ENCODE measurements at regions of chr7 and their contacts with region 1.

Region 1: GRCh38 chr7:137626469-137627067 is 220.2 kb downstream of the DGKI start:
- DNase-seq: peak; percentile 31
- ATAC-seq: peak; percentile 86
- H3K4me3 ChIP-seq: no peak overlapping the region
- H3K27ac ChIP-seq: no peak overlapping the region
- H3K4me1 ChIP-seq: no peaks in the 10 kb centered on the region
- H3K27me3 ChIP-seq: peaks cover 11% of the 10 kb centered on the region
- CTCF ChIP-seq: peak; percentile 50 to 83 (median 76); a peak in 5 of 6 replicates
- POLR2A ChIP-seq: no peak
- RAD21 ChIP-seq: peak; percentile 65

Region 2: GRCh38 chr7:137606061-137606674 is 20.4 kb before region 1 on chr7:
- CTCF ChIA-PET with region 1: interaction called, 9 read pairs
- POLR2A ChIA-PET with region 1: no interaction called
- RAD21 ChIA-PET with region 1: interaction called in 1 of 2 experiments, 3 read pairs
- intact Hi-C with region 1: loop called (anchors 1 kb)
- DNase-seq: peak; percentile 35
- ATAC-seq: peak; percentile 47; the same call in 1 of the 2 replicates
- H3K4me3 ChIP-seq: no peak overlapping the region
- H3K27ac ChIP-seq: no peak overlapping the region
- H3K4me1 ChIP-seq: no peaks in the 10 kb centered on the region
- H3K27me3 ChIP-seq: peaks cover 32% of the 10 kb centered on the region
- CTCF ChIP-seq: peak; percentile 21 to 45 (median 38); a peak in 3 of 6 replicates
- POLR2A ChIP-seq: no peak
- RAD21 ChIP-seq: peak; percentile 52

Region 3: GRCh38 chr7:137717811-137718271 is 91.3 kb after region 1 on chr7:
- CTCF ChIA-PET with region 1: no interaction called
- POLR2A ChIA-PET with region 1: no interaction called
- RAD21 ChIA-PET with region 1: no interaction called
- intact Hi-C with region 1: no loop called
- DNase-seq: no peak
- ATAC-seq: no peak
- H3K4me3 ChIP-seq: no peak overlapping the region
- H3K27ac ChIP-seq: no peak overlapping the region
- H3K4me1 ChIP-seq: no peaks in the 10 kb centered on the region
- H3K27me3 ChIP-seq: peaks cover 20% of the 10 kb centered on the region; the same call in 1 of the 2 replicates
- CTCF ChIP-seq: no peak
- POLR2A ChIP-seq: no peak
- RAD21 ChIP-seq: no peak

Region 4: DNA sequence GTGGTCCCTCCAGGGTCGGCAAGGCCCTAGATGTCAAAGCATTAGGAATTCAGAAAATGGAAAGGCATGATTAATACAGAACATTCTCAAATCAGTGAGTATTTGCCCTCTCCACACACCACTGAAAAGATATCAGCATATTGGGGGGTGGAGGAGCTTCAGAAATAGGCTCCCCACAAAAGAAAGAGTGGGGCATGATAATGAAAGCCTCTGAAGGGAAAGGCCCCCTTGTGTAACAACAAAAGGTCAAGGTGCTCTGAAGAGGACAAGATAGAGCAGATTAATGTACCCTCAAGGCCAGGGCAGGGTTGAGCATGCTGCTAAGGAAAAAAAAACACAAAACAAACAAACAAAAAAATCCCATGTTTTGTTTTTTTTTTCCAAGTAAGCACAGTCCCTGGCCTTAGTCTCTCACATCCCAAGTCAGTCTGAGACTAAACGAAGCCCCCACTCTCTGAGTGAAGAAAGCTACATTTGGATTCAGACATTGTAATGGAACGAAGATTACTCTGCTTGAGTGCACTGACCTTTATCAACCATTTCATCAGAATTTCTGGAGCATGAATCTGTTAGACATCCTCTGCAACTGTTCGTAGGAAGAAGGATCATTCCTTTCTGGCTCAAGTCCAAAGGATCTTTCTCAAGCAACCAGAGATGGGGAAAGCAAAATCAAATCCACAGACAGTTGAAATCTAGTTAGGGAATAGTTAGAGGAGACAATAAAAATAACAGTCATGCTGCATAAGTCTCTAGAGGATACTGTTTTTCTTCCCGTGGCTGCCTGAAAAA is 247.6 kb after region 1 on chr7:
- CTCF ChIA-PET with region 1: no interaction called
- POLR2A ChIA-PET with region 1: no interaction called
- RAD21 ChIA-PET with region 1: no interaction called
- intact Hi-C with region 1: no loop called
- DNase-seq: no peak
- ATAC-seq: no peak
- H3K4me3 ChIP-seq: no peak overlapping the region
- H3K27ac ChIP-seq: no peak overlapping the region
- H3K4me1 ChIP-seq: no peaks in the 10 kb centered on the region
- H3K27me3 ChIP-seq: no peaks in the 10 kb centered on the region
- CTCF ChIP-seq: no peak
- POLR2A ChIP-seq: no peak
- RAD21 ChIP-seq: no peak

Measured in HCT116 (cell line).